ENCODE measurements at regions of chr2 and their contacts with region 1.

Region 1: GRCh38 chr2:218406209-218406948 is 6.7 kb downstream of the CTDSP1 start:
- DNase-seq: peak; percentile 97 to 98
- H3K4me3 ChIP-seq: peak overlapping the region; percentile 37 to 51
- H3K27ac ChIP-seq: peak overlapping the region; percentile 93 to 94
- H3K4me1 ChIP-seq: peaks cover 0 to 25% of the 10 kb centered on the region in 2 donors
- H3K27me3 ChIP-seq: no peaks in the 10 kb centered on the region
- CTCF ChIP-seq: peak; percentile 73 to 93 (median 90)
- POLR2A ChIP-seq: peak in 1 of 2 donors; percentile 36

Region 2: GRCh38 chr2:218429571-218430301 is 23.4 kb after region 1 on chr2:
- intact Hi-C with region 1: no loop called
- DNase-seq: no peak
- H3K4me3 ChIP-seq: no peak overlapping the region
- H3K27ac ChIP-seq: no peak overlapping the region
- H3K4me1 ChIP-seq: no peaks in the 10 kb centered on the region
- H3K27me3 ChIP-seq: no peaks in the 10 kb centered on the region
- CTCF ChIP-seq: no peak
- POLR2A ChIP-seq: no peak

Region 3: GRCh38 chr2:218466016-218466521 is 59.7 kb after region 1 on chr2:
- intact Hi-C with region 1: loop called (anchors 10 kb)
- DNase-seq: no peak
- H3K4me3 ChIP-seq: no peak overlapping the region
- H3K27ac ChIP-seq: peak overlapping the region in 1 of 2 donors; percentile 19
- H3K4me1 ChIP-seq: no peaks in the 10 kb centered on the region
- H3K27me3 ChIP-seq: no peaks in the 10 kb centered on the region
- CTCF ChIP-seq: peak; percentile 32 to 56 (median 40)
- POLR2A ChIP-seq: no peak